Left cardiac atrium (tissue), 4 donors: ENCODE measurements at regions of chr22 and their contacts with region 1.

Region 1: GRCh38 chr22:33579448-33580093 is 340.7 kb downstream of the LARGE1 start:
- DNase-seq: peak; percentile 47
- ATAC-seq: peak; percentile 87 to 90

Region 2: DNA sequence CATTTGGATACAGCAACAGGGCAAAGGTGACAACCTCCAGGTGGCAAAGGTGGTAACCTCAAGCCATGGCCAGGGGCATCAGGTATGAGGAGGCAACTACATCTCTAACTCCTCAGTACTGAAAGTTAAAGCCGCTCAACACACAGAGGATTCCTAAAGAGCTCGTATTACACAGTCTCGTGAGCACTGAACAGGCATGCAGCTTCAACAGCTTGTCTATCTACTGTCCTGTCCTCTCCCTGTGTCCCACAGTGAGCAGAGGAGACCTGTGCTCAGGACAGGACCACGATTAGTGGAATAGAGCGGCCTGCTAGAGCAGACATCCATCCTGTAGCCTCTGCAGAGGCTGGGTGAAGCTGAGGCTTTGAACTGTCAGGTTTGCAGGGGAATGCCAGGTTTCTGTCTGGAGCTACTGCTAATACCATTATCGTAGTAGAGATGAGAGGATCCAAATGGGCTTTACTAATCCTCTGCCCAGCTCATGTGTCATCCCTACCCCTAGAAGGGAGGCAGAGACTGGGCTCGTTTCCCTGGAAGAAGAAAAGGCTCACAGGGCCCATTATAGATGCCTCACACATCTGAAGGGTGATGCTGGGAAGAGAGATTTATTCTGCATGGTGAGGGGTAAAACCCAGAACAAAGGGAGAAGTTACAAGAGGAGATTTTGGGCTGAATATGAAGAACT is 74.5 kb before region 1 on chr22:
- intact Hi-C with region 1: loop called in 1 of 2 experiments (anchors 10 kb)
- DNase-seq: no peak
- ATAC-seq: no peak

Region 3: GRCh38 chr22:33519071-33519973 is 60.2 kb before region 1 on chr22:
- intact Hi-C with region 1: loop called (anchors 2 to 10 kb)
- DNase-seq: peak; percentile 34
- ATAC-seq: peak; percentile 66 to 78

Region 4: GRCh38 chr22:33529424-33530113 is 50.0 kb before region 1 on chr22:
- intact Hi-C with region 1: loop called in 1 of 2 experiments (anchors 10 kb)
- DNase-seq: peak; percentile 28
- ATAC-seq: peak; percentile 15 to 70

Region 5: GRCh38 chr22:33625959-33626358 is 46.4 kb after region 1 on chr22:
- intact Hi-C with region 1: no loop called
- DNase-seq: no peak
- ATAC-seq: no peak

Region 6: GRCh38 chr22:33747576-33748180 is 168.1 kb after region 1 on chr22:
- intact Hi-C with region 1: no loop called
- DNase-seq: no peak
- ATAC-seq: peak in 1 of 2 donors; percentile 49

Region 7: GRCh38 chr22:33796494-33796893 is 216.9 kb after region 1 on chr22:
- intact Hi-C with region 1: no loop called
- DNase-seq: no peak
- ATAC-seq: no peak